ENCODE measurements at regions of chr11 and their contacts with region 1.

Region 1: DNA sequence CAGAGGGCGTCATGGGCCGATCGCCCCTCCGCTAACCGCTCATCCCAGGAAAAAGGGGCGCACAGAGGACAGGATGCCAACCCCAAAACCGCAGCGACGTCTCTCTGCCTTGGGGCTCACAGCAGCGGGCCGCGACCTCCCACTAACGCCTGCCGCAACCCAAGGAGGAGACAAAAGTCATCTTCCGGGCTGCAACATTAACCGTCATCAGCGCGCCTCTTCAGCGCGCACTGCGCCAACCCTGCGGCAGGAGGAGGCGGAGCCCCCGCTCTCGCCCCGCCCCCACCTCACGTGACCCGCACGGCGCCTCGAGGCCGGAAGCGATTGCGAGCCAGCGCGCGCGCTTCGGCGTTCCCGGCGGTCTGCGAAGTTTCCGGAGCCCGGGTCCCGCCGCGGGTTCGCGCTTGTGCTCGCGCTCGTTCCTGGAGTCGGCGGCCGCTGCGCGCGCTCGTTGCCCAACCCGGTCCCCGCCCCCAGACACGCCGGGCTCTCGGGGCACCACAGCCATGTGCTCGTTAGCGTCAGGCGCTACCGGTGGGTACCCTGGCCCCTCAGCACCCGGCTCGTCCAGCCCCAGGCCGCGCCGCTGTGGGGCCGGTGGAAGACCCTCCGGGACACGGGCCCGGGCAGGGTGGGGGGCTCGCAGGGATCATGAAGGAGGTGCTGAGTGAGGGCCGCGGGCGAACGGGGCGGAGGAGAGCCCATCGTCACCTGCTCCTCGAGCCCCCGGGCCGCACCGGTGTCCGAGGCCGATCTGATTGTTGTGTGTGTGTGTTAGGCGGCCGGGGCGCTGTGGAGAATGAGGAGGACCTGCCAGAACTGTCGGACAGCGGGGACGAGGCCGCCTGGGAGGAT is at the start of gene PRMT3:
- DNase-seq: peak; percentile 97
- H3K4me3 Mint-ChIP-seq: peak within 1 kb of the TSS; percentile 90
- H3K27ac Mint-ChIP-seq: peak within 1 kb of the TSS; percentile 99
- H3K4me1 Mint-ChIP-seq: peaks cover 19% of the 10 kb centered on the region
- H3K27me3 Mint-ChIP-seq: no peaks in the 10 kb centered on the region
- total RNA-seq, gene PRMT3: 38.3 and 39.2 TPM in 2 replicates

Region 2: GRCh38 chr11:20158597-20159257 is 228.7 kb before region 1 on chr11:
- intact Hi-C with region 1: no loop called
- DNase-seq: no peak
- H3K4me3 Mint-ChIP-seq: no peak overlapping the region
- H3K27ac Mint-ChIP-seq: peak overlapping the region; percentile 6
- H3K4me1 Mint-ChIP-seq: peaks cover 11% of the 10 kb centered on the region
- H3K27me3 Mint-ChIP-seq: peaks cover 78% of the 10 kb centered on the region

Region 3: DNA sequence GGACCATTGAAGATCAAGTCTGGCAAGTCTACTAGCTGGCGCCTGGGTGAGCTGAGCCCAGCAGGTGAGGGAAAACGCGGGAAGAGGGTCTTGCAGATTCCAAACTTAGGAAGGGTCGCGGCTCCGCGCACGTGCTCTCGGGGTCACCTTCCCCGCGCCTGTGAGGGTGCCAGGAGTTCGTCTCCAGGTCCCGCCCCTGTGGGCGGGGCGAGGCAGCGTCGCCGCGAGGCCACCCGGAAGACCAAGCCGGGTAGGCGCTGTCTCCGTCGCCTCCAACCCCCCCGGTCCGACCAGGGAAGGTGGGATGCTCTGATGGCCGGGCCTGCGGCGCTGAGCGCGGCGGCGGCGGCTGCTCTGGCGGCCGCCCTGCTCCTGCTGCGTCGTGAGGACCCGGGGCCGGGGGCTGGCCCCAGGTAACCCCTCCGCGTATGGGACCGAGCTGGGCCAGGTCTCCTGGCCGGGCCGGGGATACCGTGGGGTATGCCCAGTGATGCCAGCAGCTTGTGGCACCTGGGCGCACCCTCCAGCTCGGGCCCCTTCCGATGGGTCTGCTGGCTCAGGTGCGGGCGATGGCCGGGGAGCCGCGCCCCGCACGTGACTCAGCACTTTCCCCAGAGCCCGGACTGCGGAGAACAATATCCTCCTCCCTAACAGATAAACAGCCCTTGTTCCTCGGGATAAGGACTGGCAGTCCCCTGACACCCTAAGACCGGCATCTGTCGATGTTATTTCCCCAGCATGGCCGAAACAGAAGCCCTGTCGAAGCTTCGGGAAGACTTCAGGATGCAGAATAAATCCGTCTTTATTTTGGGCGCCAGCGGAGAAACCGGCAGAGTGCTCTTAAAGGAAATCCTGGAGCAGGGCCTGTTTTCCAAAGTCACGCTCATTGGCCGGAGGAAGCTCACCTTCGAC is 23.7 kb before region 1 on chr11 and contains the start of gene HTATIP2:
- intact Hi-C with region 1: loop called (anchors 1 kb)
- DNase-seq: peak; percentile 72
- H3K4me3 Mint-ChIP-seq: peak within 1 kb of the TSS; percentile 84
- H3K27ac Mint-ChIP-seq: peak within 1 kb of the TSS; percentile 90
- H3K4me1 Mint-ChIP-seq: peaks cover 60% of the 10 kb centered on the region
- H3K27me3 Mint-ChIP-seq: no peaks in the 10 kb centered on the region
- total RNA-seq, gene HTATIP2: 62.7 and 63.5 TPM in 2 replicates

Region 4: GRCh38 chr11:20421946-20422345 is 34.5 kb after region 1 on chr11:
- intact Hi-C with region 1: loop called (anchors 5 kb)
- DNase-seq: no peak
- H3K4me3 Mint-ChIP-seq: no peak overlapping the region
- H3K27ac Mint-ChIP-seq: peak overlapping the region; percentile 52
- H3K4me1 Mint-ChIP-seq: peaks cover 33% of the 10 kb centered on the region
- H3K27me3 Mint-ChIP-seq: no peaks in the 10 kb centered on the region

Region 5: GRCh38 chr11:20609727-20610707 is 222.5 kb after region 1 on chr11:
- intact Hi-C with region 1: loop called (anchors 5 kb)
- DNase-seq: peak; percentile 49
- H3K4me3 Mint-ChIP-seq: peak overlapping the region; percentile 54
- H3K27ac Mint-ChIP-seq: no peak overlapping the region
- H3K4me1 Mint-ChIP-seq: peaks cover 6% of the 10 kb centered on the region
- H3K27me3 Mint-ChIP-seq: peaks cover 68% of the 10 kb centered on the region